B cell (primary cell): ENCODE measurements at regions of chr12 and their contacts with region 1.

Region 1: GRCh38 chr12:113184900-113185773 is at the starts of genes DDX54 and RITA1:
- DNase-seq: peak; percentile 95
- ATAC-seq: peak; percentile 84
- H3K4me3 ChIP-seq: peak within 1 kb of the TSS; percentile 51 to 100 (median 94)
- H3K4me3 Mint-ChIP-seq: peak within 1 kb of the TSS; percentile 95
- H3K27ac ChIP-seq: peak within 1 kb of the TSS; percentile 98
- H3K27ac Mint-ChIP-seq: peak within 1 kb of the TSS; percentile 96
- H3K4me1 ChIP-seq: peaks cover 25 to 34% of the 10 kb centered on the region in 2 donors
- H3K4me1 Mint-ChIP-seq: peaks cover 38% of the 10 kb centered on the region
- H3K27me3 ChIP-seq: no peaks in the 10 kb centered on the region
- H3K27me3 Mint-ChIP-seq: no peaks in the 10 kb centered on the region
- CTCF ChIP-seq: no peak
- total RNA-seq, gene DDX54: 90.1 and 101 TPM in 2 replicates
- total RNA-seq, gene RITA1: 16.2 and 17.9 TPM in 2 replicates

Region 2: DNA sequence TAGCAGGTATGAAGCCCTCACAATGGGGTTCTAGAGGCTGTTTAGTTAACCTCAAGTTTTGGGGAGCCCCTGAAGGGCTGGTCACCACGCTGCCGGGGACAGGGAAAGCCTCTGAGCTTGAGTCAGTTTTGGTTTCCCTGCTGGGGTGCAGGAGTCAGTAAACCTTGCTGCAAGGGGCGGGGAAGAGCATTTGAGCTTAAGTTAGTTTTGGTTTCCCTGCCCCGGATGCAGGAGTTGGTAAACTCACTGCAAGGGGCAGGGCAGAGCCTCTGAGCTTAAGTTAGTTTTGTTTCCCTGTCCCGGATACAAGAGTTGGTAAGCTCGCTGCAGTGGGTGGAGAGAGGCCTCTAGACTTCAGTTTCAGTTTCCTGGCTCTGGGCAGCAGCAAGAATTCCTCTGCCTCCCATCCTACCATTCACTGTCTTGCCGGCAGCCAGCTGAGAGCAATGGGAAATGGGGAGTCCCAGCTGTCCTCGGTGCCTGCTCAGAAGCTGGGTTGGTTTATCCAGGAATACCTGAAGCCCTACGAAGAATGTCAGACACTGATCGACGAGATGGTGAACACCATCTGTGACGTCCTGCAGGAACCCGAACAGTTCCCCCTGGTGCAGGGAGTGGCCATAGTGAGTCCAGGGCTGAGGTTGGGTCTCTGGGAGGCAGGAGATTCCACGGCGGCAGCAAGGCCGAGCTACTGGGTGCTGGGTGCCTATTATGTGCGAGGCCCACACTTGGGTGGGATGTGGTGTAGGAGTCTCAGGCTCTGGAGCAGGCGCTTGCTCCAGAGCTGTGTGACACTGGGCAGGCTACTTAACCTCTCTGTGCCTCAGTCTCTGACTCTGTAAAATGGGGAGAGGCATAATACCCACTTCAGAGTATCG is 206.7 kb before region 1 on chr12 and contains the start of gene OAS2:
- CTCF ChIA-PET with region 1: no interaction called
- POLR2A ChIA-PET with region 1: no interaction called
- intact Hi-C with region 1: loop called (anchors 5 kb)
- DNase-seq: peak; percentile 92
- ATAC-seq: peak; percentile 94
- H3K4me3 ChIP-seq: peak within 1 kb of the TSS; percentile 70 to 94 (median 78)
- H3K4me3 Mint-ChIP-seq: peak within 1 kb of the TSS; percentile 98
- H3K27ac ChIP-seq: peak within 1 kb of the TSS; percentile 90 to 94
- H3K27ac Mint-ChIP-seq: peak within 1 kb of the TSS; percentile 98
- H3K4me1 ChIP-seq: peaks cover 39 to 40% of the 10 kb centered on the region in 2 donors
- H3K4me1 Mint-ChIP-seq: peaks cover 59% of the 10 kb centered on the region
- H3K27me3 ChIP-seq: no peaks in the 10 kb centered on the region
- H3K27me3 Mint-ChIP-seq: no peaks in the 10 kb centered on the region
- CTCF ChIP-seq: no peak
- total RNA-seq, gene OAS2: 57.4 and 59.3 TPM in 2 replicates

Region 3: GRCh38 chr12:113161414-113162016 is 23.6 kb before region 1 on chr12:
- CTCF ChIA-PET with region 1: no interaction called
- POLR2A ChIA-PET with region 1: no interaction called
- intact Hi-C with region 1: no loop called
- DNase-seq: peak; percentile 45
- ATAC-seq: peak; percentile 73
- H3K4me3 ChIP-seq: no peak overlapping the region
- H3K4me3 Mint-ChIP-seq: no peak overlapping the region
- H3K27ac ChIP-seq: no peak overlapping the region
- H3K27ac Mint-ChIP-seq: no peak overlapping the region
- H3K4me1 ChIP-seq: no peaks in the 10 kb centered on the region
- H3K4me1 Mint-ChIP-seq: peaks cover 4% of the 10 kb centered on the region
- H3K27me3 ChIP-seq: no peaks in the 10 kb centered on the region
- H3K27me3 Mint-ChIP-seq: no peaks in the 10 kb centered on the region
- CTCF ChIP-seq: no peak

Region 4: DNA sequence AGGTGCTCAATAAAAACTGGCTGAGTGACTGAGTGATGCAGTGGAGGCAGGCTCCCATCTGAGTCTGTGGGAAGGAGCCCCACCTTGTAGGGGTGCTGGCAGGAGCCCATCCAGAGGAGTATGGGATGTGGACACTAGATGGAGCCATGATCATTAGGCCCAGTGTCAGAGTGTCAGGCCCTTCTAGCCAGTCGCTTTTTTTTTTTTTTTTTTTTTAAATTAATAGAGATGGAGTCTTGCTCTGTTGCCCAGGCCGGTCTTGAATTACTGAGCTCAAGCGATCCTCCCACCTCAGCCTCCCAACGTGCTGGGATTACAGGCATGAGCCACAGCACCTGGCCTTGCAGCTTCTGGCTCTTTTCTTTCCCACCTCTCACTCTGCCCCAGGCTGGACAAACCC is 11.9 kb after region 1 on chr12:
- CTCF ChIA-PET with region 1: interaction called, 15 read pairs
- POLR2A ChIA-PET with region 1: interaction called, 11 read pairs
- intact Hi-C with region 1: no loop called
- DNase-seq: peak; percentile 84
- ATAC-seq: peak; percentile 94
- H3K4me3 ChIP-seq: no peak overlapping the region
- H3K4me3 Mint-ChIP-seq: peak overlapping the region; percentile 0
- H3K27ac ChIP-seq: no peak overlapping the region
- H3K27ac Mint-ChIP-seq: peak overlapping the region; percentile 73
- H3K4me1 ChIP-seq: peaks cover 12 to 18% of the 10 kb centered on the region in 2 donors
- H3K4me1 Mint-ChIP-seq: peaks cover 20% of the 10 kb centered on the region
- H3K27me3 ChIP-seq: no peaks in the 10 kb centered on the region
- H3K27me3 Mint-ChIP-seq: no peaks in the 10 kb centered on the region
- CTCF ChIP-seq: peak; percentile 73

Region 5: DNA sequence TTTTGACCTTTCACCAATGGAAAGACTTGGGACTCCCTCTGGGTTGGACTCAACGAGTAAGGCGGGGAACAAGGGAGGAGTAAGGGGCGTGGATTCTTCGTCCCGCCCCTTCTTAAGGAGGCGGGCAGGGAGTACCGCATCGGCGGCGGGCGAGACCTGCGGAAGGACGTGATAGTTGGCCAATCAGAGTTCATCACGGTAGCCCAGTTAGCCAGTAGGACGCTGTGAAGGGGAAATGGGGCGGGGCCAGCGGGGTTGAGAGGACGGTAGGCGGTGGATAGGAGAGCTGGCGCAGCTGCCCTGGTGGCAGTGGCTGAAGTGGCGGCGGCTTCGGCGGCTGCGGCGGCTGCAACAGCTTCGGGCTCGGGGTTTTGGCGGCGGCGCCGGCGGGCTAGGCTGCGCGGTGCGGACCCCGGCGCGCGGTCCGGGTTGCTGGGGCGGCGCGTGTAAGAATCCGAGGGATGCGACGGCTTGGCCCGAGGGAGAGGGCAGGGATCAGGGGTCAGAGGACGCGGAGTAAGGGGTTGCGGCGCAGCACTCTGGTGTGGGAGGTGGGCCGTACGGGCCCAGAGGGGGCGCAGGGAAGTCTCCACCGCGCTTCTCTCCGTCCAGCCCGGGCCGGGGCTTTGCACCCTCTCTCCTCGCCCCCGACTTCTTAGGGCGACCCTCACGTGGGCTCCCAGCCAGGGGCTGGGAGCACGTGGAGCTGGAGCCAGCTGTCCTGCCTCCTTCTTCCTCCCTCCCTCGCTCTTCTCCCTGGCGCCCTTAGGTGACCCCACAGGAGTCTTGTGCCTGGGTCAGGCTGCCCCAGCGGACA is 36.3 kb after region 1 on chr12 and contains the start of gene TPCN1:
- CTCF ChIA-PET with region 1: interaction called, 3 read pairs
- POLR2A ChIA-PET with region 1: interaction called, 7 read pairs
- intact Hi-C with region 1: loop called (anchors 1 kb)
- DNase-seq: peak; percentile 100
- ATAC-seq: peak; percentile 89
- H3K4me3 ChIP-seq: peak within 1 kb of the TSS; percentile 69 to 92 (median 86)
- H3K4me3 Mint-ChIP-seq: peak within 1 kb of the TSS; percentile 90
- H3K27ac ChIP-seq: peak within 1 kb of the TSS; percentile 72 to 93
- H3K27ac Mint-ChIP-seq: peak within 1 kb of the TSS; percentile 89
- H3K4me1 ChIP-seq: peaks cover 32 to 55% of the 10 kb centered on the region in 2 donors
- H3K4me1 Mint-ChIP-seq: peaks cover 41% of the 10 kb centered on the region
- H3K27me3 ChIP-seq: no peaks in the 10 kb centered on the region
- H3K27me3 Mint-ChIP-seq: no peaks in the 10 kb centered on the region
- CTCF ChIP-seq: peak; percentile 21
- total RNA-seq, gene TPCN1: 258 and 267 TPM in 2 replicates

Region 6: GRCh38 chr12:113334786-113335540 is 149.8 kb after region 1 on chr12 and contains the start of gene SLC8B1:
- CTCF ChIA-PET with region 1: no interaction called
- POLR2A ChIA-PET with region 1: interaction called, 3 read pairs
- intact Hi-C with region 1: loop called (anchors 2 kb)
- DNase-seq: peak; percentile 88
- ATAC-seq: peak; percentile 100
- H3K4me3 ChIP-seq: peak within 1 kb of the TSS; percentile 74 to 96 (median 85)
- H3K4me3 Mint-ChIP-seq: peak within 1 kb of the TSS; percentile 98
- H3K27ac ChIP-seq: peak within 1 kb of the TSS in 1 of 2 donors; percentile 21
- H3K27ac Mint-ChIP-seq: peak within 1 kb of the TSS; percentile 78
- H3K4me1 ChIP-seq: peaks cover 29 to 36% of the 10 kb centered on the region in 2 donors
- H3K4me1 Mint-ChIP-seq: peaks cover 35% of the 10 kb centered on the region
- H3K27me3 ChIP-seq: no peaks in the 10 kb centered on the region
- H3K27me3 Mint-ChIP-seq: no peaks in the 10 kb centered on the region
- CTCF ChIP-seq: no peak
- total RNA-seq, gene SLC8B1: 34.1 and 35.6 TPM in 2 replicates